ENCODE measurements at regions of chr5 and their contacts with region 1.

Region 1: DNA sequence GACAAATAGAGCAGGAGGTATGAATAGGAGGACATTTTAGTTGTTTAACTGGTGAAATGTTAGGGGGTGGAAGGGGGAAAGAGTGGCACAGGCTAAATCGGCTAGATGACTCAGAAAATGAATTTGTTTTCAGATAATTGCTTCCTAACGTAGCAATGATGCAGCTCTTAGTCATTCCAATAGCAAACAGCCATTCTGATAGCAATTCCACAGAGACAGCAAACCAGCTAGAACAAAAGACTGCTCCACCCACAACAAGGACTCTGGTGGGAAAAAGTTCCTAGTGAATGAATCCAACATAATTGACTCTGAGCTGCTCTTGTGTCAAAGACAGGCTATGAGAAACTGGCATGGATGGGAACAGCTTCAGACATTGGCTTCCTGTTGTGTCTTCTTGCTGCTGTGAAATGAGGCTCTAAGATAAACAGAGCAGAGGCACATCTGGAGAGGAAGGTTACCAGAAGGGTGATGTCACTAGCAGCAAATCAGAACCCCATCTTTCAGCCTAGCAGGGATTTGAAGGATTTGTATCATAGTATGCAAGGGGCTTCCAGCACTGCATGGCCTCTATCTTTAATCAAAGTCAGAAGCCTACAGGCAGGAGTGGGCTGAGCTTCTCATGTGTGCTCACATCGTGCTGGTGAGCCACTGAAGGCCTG is 28.1 kb upstream of the F2RL1 start:
- DNase-seq: peak; percentile 97
- H3K4me3 ChIP-seq: no peak overlapping the region
- H3K27ac ChIP-seq: peak overlapping the region; percentile 94
- H3K4me1 ChIP-seq: peaks cover 36% of the 10 kb centered on the region
- H3K27me3 ChIP-seq: no peaks in the 10 kb centered on the region
- CTCF ChIP-seq: no peak

Region 2: GRCh38 chr5:76544268-76544926 is 246.4 kb before region 1 on chr5:
- CTCF ChIA-PET with region 1: no interaction called
- dilution Hi-C with region 1: no loop called
- in situ Hi-C with region 1: no loop called
- intact Hi-C with region 1: no loop called
- DNase-seq: peak; percentile 16
- H3K4me3 ChIP-seq: no peak overlapping the region
- H3K27ac ChIP-seq: no peak overlapping the region
- H3K4me1 ChIP-seq: no peaks in the 10 kb centered on the region
- H3K27me3 ChIP-seq: peaks cover 2% of the 10 kb centered on the region
- CTCF ChIP-seq: peak; percentile 49 to 72

Region 3: DNA sequence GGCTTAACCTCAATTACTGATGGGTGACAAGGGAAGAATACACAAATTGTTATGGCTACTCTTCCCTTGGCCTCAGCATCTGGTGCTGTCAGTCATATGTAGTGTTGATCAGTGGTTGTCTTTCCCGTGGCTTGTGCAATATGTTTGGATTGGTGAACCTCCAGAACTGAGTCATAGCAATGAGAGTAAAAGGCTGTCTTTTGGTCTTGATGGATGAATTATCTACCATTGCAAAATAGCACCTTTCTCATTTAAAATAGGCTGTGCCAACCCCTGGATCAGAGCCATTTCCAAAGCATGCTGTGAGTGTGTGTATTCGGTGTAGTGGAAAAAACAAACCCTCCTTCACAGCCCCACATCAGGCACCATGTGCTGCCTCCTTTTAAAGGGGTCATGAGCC is 89.5 kb before region 1 on chr5:
- CTCF ChIA-PET with region 1: no interaction called
- dilution Hi-C with region 1: loop called (anchors 5 kb)
- in situ Hi-C with region 1: no loop called
- intact Hi-C with region 1: no loop called
- DNase-seq: peak; percentile 97
- H3K4me3 ChIP-seq: no peak overlapping the region
- H3K27ac ChIP-seq: no peak overlapping the region
- H3K4me1 ChIP-seq: peaks cover 15% of the 10 kb centered on the region
- H3K27me3 ChIP-seq: no peaks in the 10 kb centered on the region
- CTCF ChIP-seq: no peak

Region 4: DNA sequence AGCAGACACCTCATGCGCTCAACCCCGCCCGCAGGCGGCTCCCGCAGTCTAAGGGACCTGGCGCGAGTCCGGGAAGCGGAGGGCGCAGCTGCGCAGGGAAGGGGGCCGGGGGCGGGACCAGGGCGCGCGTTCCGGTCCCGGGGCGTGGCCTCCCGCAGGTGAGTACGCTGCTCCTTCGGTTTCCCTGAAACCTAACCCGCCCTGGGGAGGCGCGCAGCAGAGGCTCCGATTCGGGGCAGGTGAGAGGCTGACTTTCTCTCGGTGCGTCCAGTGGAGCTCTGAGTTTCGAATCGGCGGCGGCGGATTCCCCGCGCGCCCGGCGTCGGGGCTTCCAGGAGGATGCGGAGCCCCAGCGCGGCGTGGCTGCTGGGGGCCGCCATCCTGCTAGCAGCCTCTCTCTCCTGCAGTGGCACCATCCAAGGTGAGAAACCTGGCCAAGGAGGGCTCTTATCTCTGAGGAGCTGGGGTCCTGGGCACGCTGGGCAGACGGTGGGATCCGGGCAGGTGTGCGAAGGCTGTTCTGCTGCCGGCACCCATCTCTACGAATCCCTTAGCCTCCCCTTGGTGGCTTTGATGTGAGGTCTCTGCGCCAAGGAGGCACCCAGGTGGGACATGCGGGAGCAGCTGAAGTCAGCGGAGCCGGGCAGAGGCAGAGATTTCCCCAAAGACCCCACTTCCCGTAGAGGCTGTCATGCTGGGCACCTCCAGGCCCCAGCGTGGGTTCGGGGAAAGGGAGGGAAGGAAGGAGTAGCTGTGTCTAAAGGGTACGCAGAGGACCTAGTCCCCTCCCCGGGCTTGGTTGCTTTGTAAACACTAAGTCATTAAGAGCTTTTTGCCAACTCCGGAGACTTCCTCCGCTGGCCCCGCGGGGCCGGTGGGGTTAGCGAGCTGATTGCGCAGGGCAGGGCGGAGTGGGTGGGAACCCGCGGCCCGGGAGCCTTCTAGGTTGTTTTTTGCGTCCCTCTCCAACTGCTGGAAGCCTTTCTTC is 28.4 kb after region 1 on chr5 and contains the start of gene F2RL1:
- CTCF ChIA-PET with region 1: no interaction called
- dilution Hi-C with region 1: no loop called
- in situ Hi-C with region 1: loop called in 1 of 2 experiments (anchors 5 kb)
- intact Hi-C with region 1: loop called (anchors 1 kb)
- DNase-seq: peak; percentile 98
- H3K4me3 ChIP-seq: peak within 1 kb of the TSS; percentile 81 to 97 (median 94)
- H3K27ac ChIP-seq: peak within 1 kb of the TSS; percentile 97
- H3K4me1 ChIP-seq: peaks cover 39% of the 10 kb centered on the region
- H3K27me3 ChIP-seq: no peaks in the 10 kb centered on the region
- CTCF ChIP-seq: no peak
- total RNA-seq, gene F2RL1: 57.2 to 93.5 TPM

Region 5: DNA sequence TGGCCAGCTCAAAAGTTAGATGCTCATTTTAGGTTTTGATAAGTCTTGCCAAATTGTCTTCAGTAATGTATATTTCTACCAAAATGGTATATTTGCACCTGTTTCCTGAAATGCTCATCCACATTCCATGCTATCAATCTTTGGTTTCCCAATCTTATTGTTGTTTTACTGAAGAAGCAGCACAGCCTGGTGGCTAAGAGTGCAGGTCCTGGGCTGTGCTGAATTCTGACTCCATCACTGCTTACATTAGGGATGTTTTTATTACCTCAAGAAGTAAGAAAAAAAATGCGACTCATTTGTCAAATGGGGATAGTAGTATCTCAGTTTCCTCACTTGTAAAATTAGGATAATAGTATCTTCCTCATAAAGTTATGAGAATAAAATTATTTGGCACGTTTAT is 45.4 kb after region 1 on chr5:
- CTCF ChIA-PET with region 1: no interaction called
- dilution Hi-C with region 1: no loop called
- in situ Hi-C with region 1: no loop called
- intact Hi-C with region 1: loop called (anchors 1 kb)
- DNase-seq: no peak
- H3K4me3 ChIP-seq: no peak overlapping the region
- H3K27ac ChIP-seq: no peak overlapping the region
- H3K4me1 ChIP-seq: peaks cover 2% of the 10 kb centered on the region
- H3K27me3 ChIP-seq: no peaks in the 10 kb centered on the region
- CTCF ChIP-seq: peak in 1 of 2 donors; percentile 15